Activated CD4-positive, alpha-beta T cell treated with anti-CD3 and anti-CD28 coated beads, Interleukin-2, amount 10 ng/mL, durations not matched to agents 7 days and 5 days (primary cell): ENCODE measurements at regions of chr15 and their contacts with region 1.

Region 1: GRCh38 chr15:58574631-58575030 is 142.8 kb downstream of the LIPC start:
- DNase-seq: no peak
- H3K4me3 Mint-ChIP-seq: no peak overlapping the region
- H3K27ac Mint-ChIP-seq: no peak overlapping the region
- H3K4me1 Mint-ChIP-seq: peaks cover 6% of the 10 kb centered on the region
- H3K27me3 Mint-ChIP-seq: no peaks in the 10 kb centered on the region

Region 2: GRCh38 chr15:58585693-58586443 is 11.2 kb after region 1 on chr15:
- CTCF ChIA-PET with region 1: interaction called, 17 read pairs
- POLR2A ChIA-PET with region 1: no interaction called
- DNase-seq: no peak
- H3K4me3 Mint-ChIP-seq: no peak overlapping the region
- H3K27ac Mint-ChIP-seq: no peak overlapping the region
- H3K4me1 Mint-ChIP-seq: peaks cover 14% of the 10 kb centered on the region
- H3K27me3 Mint-ChIP-seq: peaks cover 18% of the 10 kb centered on the region